ENCODE measurements at regions of chr17 and their contacts with region 1.

Region 1: DNA sequence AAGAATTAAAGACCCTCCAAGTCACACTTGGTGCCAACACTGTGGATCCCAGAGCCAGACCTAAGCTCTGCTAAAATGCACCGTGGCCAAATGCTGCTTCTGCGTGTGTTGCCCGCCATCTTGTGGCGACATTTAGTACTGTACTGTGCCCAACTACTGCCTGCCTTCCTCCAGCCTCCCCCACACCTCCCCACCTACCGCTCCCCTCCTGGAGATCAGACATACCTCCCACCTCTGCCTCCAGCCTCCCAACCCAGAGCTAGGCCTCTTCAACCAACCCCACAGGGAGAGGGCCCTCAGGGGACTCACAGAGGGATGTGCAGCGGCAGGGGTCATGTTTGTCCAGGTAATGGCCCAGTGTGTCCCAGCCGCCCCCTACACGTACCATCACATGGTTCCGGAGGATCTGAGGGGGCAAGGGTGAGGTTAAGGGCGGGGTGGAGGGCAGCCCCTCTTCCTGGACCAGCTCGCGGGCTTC is 5.5 kb downstream of the GAS2L2 start:
- DNase-seq: peak; percentile 84
- H3K4me3 Mint-ChIP-seq: no peak overlapping the region
- H3K27ac Mint-ChIP-seq: no peak overlapping the region
- H3K4me1 Mint-ChIP-seq: peaks cover 14% of the 10 kb centered on the region
- H3K27me3 Mint-ChIP-seq: peaks cover 36% of the 10 kb centered on the region

Region 2: GRCh38 chr17:35617505-35617904 is 130.1 kb before region 1 on chr17:
- CTCF ChIA-PET with region 1: interaction called, 10 read pairs
- POLR2A ChIA-PET with region 1: no interaction called
- DNase-seq: no peak
- H3K4me3 Mint-ChIP-seq: no peak overlapping the region
- H3K27ac Mint-ChIP-seq: no peak overlapping the region
- H3K4me1 Mint-ChIP-seq: peaks cover 2% of the 10 kb centered on the region
- H3K27me3 Mint-ChIP-seq: no peaks in the 10 kb centered on the region

Region 3: GRCh38 chr17:35645923-35646322 is 101.7 kb before region 1 on chr17:
- CTCF ChIA-PET with region 1: no interaction called
- POLR2A ChIA-PET with region 1: no interaction called
- DNase-seq: no peak
- H3K4me3 Mint-ChIP-seq: no peak overlapping the region
- H3K27ac Mint-ChIP-seq: no peak overlapping the region
- H3K4me1 Mint-ChIP-seq: no peaks in the 10 kb centered on the region
- H3K27me3 Mint-ChIP-seq: no peaks in the 10 kb centered on the region

Region 4: GRCh38 chr17:35808962-35809854 is 61.6 kb after region 1 on chr17 and contains the start of gene TAF15:
- CTCF ChIA-PET with region 1: interaction called, 11 read pairs
- POLR2A ChIA-PET with region 1: no interaction called
- DNase-seq: peak; percentile 97
- H3K4me3 Mint-ChIP-seq: peak within 1 kb of the TSS; percentile 94
- H3K27ac Mint-ChIP-seq: peak within 1 kb of the TSS; percentile 96
- H3K4me1 Mint-ChIP-seq: peaks cover 58% of the 10 kb centered on the region
- H3K27me3 Mint-ChIP-seq: no peaks in the 10 kb centered on the region
- total RNA-seq, gene TAF15: 274 to 311 TPM

Region 5: GRCh38 chr17:35918665-35919064 is 171.1 kb after region 1 on chr17:
- CTCF ChIA-PET with region 1: no interaction called
- POLR2A ChIA-PET with region 1: no interaction called
- DNase-seq: no peak
- H3K4me3 Mint-ChIP-seq: no peak overlapping the region
- H3K27ac Mint-ChIP-seq: no peak overlapping the region
- H3K4me1 Mint-ChIP-seq: peaks cover 38% of the 10 kb centered on the region
- H3K27me3 Mint-ChIP-seq: no peaks in the 10 kb centered on the region